Activated CD4-positive, alpha-beta memory T cell treated with anti-CD3 and anti-CD28 coated beads for 36 hours (primary cell): ENCODE measurements at regions of chr13 and their contacts with region 1.

Region 1: DNA sequence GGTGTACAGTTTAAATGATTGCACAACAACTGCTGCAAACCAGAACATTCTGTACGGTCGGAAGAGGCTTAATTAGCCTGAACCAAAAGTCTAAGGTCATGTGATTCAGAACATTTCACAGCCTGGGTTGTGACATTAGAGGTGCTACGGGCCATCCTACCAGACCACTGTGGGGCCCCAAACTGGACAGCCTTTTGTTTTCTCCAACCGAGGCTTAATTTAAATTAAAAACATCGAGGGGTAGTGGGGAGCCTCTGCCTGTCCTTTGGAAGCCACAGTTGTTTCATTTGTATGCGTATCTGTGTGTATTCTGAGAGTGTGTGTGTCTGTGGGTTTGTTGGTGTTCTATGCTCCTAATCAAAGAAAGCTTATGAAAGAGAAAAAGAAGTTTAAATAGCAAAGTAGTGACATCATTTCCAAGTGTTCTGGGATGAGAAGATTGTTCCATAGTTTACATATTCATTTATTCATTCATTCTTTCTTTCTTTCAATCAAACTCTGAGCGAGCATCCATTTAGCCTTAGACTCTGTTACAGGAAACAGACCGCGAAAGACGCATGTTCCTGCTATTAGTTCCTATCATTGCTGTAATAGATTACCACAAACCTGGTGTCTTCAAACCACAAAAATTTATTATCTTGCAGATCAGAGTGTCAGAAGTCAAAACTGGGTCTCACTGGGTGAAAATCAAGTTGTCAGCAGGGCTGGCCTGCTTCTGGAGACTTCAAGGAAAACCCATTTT is 444.8 kb downstream of the FOXO1 start:
- DNase-seq: peak; percentile 54
- H3K4me3 Mint-ChIP-seq: peak overlapping the region; percentile 30
- H3K27ac Mint-ChIP-seq: peak overlapping the region; percentile 74
- H3K4me1 Mint-ChIP-seq: peaks cover 63% of the 10 kb centered on the region
- H3K27me3 Mint-ChIP-seq: no peaks in the 10 kb centered on the region

Region 2: GRCh38 chr13:40069173-40070044 is 152.2 kb before region 1 on chr13:
- CTCF ChIA-PET with region 1: interaction called, 7 read pairs
- POLR2A ChIA-PET with region 1: no interaction called
- intact Hi-C with region 1: loop called (anchors 2 kb)
- DNase-seq: peak; percentile 83
- H3K4me3 Mint-ChIP-seq: no peak overlapping the region
- H3K27ac Mint-ChIP-seq: no peak overlapping the region
- H3K4me1 Mint-ChIP-seq: peaks cover 24% of the 10 kb centered on the region
- H3K27me3 Mint-ChIP-seq: no peaks in the 10 kb centered on the region

Region 3: DNA sequence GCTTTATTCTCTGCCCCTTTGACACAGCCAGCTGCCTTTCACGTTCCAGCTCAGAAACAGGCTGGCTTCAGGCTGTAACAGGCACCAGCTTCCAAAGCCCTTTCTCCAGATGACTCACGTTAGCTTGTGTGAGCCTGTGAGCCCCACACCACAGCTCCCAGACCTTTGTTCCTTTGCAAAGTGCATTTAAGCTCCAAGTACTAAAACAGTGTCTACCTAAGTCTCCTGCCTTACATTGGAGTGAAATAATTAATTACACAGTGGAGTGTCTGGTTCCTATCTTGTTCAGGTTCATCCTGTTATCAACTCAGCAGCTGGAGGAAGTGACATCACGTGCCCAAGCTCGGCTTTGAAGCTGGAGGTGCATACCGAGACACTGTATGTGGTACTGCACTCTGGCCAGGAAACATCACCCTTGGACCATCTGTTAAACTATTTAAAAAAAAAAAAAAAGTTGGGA is 31.0 kb before region 1 on chr13:
- CTCF ChIA-PET with region 1: no interaction called
- POLR2A ChIA-PET with region 1: no interaction called
- intact Hi-C with region 1: loop called (anchors 1 kb)
- DNase-seq: peak; percentile 79
- H3K4me3 Mint-ChIP-seq: peak overlapping the region; percentile 9
- H3K27ac Mint-ChIP-seq: peak overlapping the region; percentile 85
- H3K4me1 Mint-ChIP-seq: peaks cover 66% of the 10 kb centered on the region
- H3K27me3 Mint-ChIP-seq: no peaks in the 10 kb centered on the region

Region 4: DNA sequence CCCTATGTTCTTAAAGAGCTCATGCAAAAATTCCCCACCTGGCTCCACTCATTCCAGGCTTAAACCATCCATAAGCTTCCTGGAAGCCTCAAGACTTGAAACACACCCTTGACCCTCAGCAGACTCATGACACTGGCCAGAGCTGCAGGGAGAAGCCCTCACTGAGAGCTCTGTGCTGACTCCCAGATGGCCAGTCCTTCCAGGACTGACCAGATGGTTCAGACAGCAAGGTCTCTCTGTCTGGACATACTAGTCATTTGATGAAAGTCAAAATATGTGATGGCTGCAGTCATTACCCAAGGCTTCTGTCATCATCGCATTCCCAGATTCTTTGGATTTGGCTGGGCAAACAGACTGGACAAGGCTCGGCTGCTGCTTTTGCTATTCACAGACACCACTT is 47.5 kb after region 1 on chr13:
- CTCF ChIA-PET with region 1: no interaction called
- POLR2A ChIA-PET with region 1: no interaction called
- intact Hi-C with region 1: no loop called
- DNase-seq: no peak
- H3K4me3 Mint-ChIP-seq: no peak overlapping the region
- H3K27ac Mint-ChIP-seq: no peak overlapping the region
- H3K4me1 Mint-ChIP-seq: peaks cover 26% of the 10 kb centered on the region
- H3K27me3 Mint-ChIP-seq: no peaks in the 10 kb centered on the region

Region 5: GRCh38 chr13:40318366-40318765 is 96.7 kb after region 1 on chr13:
- CTCF ChIA-PET with region 1: no interaction called
- POLR2A ChIA-PET with region 1: interaction called, 6 read pairs
- intact Hi-C with region 1: loop called (anchors 10 kb)
- DNase-seq: no peak
- H3K4me3 Mint-ChIP-seq: no peak overlapping the region
- H3K27ac Mint-ChIP-seq: no peak overlapping the region
- H3K4me1 Mint-ChIP-seq: peaks cover 60% of the 10 kb centered on the region
- H3K27me3 Mint-ChIP-seq: no peaks in the 10 kb centered on the region

Region 6: DNA sequence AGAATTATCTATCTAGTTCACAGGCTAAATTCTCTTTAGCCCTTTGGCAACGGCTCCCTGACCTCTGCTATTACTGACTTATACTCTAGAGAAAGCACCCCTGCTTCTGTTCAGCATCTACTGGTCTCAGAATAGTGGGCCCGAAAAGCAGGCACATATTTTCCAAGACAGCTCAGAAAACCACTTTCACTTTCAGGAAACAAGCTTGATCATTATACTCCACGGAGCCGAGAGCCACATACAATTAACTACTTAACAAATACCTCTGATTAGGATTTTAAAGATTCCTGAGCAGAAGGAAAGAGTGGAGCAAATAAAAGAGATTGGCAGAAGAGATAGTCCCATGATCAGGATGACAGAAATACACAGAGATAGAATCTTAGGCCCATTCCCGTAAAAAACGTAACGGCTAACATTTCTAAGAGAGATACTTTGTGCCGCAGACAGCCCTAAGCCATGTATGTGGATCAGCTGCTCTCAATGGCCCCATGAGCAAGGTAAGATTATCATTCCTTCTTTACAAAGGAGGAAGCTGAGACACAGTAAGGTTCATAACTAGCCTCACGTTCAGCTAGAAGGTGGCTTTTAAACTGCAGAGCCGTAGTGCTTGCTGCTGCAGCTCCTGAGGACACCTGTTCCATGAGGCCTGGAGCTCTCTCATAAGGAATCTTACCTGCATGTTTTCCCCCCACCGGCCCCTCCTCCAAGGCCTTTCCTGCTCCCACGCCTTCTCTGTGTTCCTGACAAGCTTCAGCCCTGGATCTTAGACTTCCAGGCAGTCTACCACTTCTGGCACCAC is 217.6 kb after region 1 on chr13:
- CTCF ChIA-PET with region 1: no interaction called
- POLR2A ChIA-PET with region 1: no interaction called
- intact Hi-C with region 1: loop called (anchors 2 kb)
- DNase-seq: peak; percentile 42
- H3K4me3 Mint-ChIP-seq: peak overlapping the region; percentile 59
- H3K27ac Mint-ChIP-seq: peak overlapping the region; percentile 71
- H3K4me1 Mint-ChIP-seq: peaks cover 34% of the 10 kb centered on the region
- H3K27me3 Mint-ChIP-seq: no peaks in the 10 kb centered on the region